ENCODE measurements at regions of chr18 and their contacts with region 1.

Region 1: DNA sequence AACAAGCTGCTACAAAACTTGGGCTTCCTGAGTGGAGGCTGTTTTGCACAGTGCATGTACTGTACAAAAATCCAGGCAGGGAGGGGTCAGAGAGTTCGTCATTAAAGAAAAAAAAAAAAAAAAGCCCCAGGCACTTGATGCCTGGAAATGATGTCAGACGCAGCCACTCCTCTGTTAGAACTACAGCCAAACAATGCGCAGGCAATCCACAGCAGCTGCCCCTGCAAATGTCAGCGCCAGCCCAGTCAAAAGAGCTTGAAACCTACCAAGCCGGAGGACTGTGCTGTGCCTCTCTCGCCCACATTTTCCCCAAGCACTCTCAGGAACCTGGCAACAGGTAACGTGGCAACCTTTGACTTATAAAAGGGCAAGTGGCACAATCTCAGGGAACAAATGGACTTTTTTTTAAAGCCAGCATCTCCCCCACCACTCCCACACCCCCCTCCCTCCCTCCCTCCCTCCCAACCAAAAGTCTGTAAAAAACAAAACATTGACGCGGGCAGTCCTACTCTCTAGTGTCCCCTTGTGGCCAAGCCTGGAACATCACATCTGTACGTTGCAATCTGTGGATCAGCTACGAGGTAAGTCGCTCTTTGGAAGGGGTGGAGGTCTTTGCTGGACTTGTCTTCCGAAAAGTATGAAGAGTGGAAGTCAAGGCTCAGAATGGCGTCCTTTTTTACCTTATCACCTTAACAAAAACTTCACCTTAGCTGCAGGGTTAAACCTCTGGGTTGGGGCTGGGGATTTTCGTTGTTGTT is 144.1 kb downstream of the TGIF1 start:
- DNase-seq: peak; percentile 91 to 93
- H3K4me3 ChIP-seq: peak overlapping the region; percentile 69
- H3K27ac ChIP-seq: peak overlapping the region; percentile 100
- H3K4me1 ChIP-seq: peaks cover 77% of the 10 kb centered on the region
- H3K27me3 ChIP-seq: no peaks in the 10 kb centered on the region
- CTCF ChIP-seq: peak; percentile 88

Region 2: GRCh38 chr18:3281456-3282400 is 312.4 kb before region 1 on chr18:
- CTCF ChIA-PET with region 1: interaction called, 5 read pairs
- POLR2A ChIA-PET with region 1: interaction called, 43 read pairs
- intact Hi-C with region 1: loop called (anchors 1 kb)
- DNase-seq: peak in 1 of 2 experiments; percentile 75
- H3K4me3 ChIP-seq: no peak overlapping the region
- H3K27ac ChIP-seq: peak overlapping the region; percentile 23; the same call in 1 of the 2 replicates
- H3K4me1 ChIP-seq: peaks cover 24% of the 10 kb centered on the region
- H3K27me3 ChIP-seq: no peaks in the 10 kb centered on the region
- CTCF ChIP-seq: peak; percentile 85

Region 3: GRCh38 chr18:3389977-3390376 is 204.1 kb before region 1 on chr18:
- CTCF ChIA-PET with region 1: no interaction called
- POLR2A ChIA-PET with region 1: interaction called, 15 read pairs
- intact Hi-C with region 1: no loop called
- DNase-seq: no peak
- H3K4me3 ChIP-seq: no peak overlapping the region
- H3K27ac ChIP-seq: 0 out of 2 replicates have a peak overlapping the region, but pooled peaks have one; percentile 99
- H3K4me1 ChIP-seq: peaks cover 50% of the 10 kb centered on the region
- H3K27me3 ChIP-seq: no peaks in the 10 kb centered on the region
- CTCF ChIP-seq: no peak

Region 4: DNA sequence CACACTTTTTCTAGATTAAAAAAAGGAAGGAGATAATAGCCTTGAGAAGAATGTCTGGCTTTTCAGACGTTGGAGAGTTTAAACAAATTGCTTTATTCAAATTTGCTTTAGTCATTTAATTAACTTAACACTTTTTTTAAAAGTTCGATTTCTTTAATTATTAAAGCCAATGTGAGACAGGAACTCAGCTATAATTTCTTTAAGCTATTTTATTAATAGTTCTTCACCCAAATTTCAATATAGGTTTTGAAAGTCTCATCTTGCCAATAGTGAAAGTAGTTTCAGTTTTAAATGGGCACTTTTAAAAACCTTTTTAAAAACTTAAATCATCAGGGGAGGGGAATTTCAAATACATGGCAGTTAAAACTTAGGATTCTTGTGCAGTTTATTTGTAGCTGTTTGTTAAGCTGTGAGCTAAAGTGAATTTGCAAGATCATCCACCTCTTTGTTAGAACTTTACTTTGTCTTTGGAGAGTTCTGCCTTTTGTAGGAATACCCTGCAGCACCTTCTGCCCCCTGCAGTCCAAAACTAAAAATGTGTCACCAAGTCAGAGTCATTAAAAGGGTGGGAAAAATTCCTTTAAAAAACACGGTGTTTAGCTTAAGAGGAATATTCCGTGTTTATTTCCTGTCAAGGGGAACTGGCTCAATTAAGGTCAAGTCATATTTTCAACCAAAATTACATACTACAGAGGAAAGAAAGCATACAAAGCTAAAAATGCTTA is 139.6 kb before region 1 on chr18:
- CTCF ChIA-PET with region 1: interaction called, 3 read pairs
- POLR2A ChIA-PET with region 1: interaction called, 8 read pairs
- intact Hi-C with region 1: loop called (anchors 1 kb)
- DNase-seq: peak; percentile 41 to 52
- H3K4me3 ChIP-seq: peak overlapping the region; percentile 83
- H3K27ac ChIP-seq: peak overlapping the region; percentile 96
- H3K4me1 ChIP-seq: peaks cover 49% of the 10 kb centered on the region
- H3K27me3 ChIP-seq: no peaks in the 10 kb centered on the region; the same call in 1 of the 2 replicates
- CTCF ChIP-seq: peak; percentile 79

Region 5: DNA sequence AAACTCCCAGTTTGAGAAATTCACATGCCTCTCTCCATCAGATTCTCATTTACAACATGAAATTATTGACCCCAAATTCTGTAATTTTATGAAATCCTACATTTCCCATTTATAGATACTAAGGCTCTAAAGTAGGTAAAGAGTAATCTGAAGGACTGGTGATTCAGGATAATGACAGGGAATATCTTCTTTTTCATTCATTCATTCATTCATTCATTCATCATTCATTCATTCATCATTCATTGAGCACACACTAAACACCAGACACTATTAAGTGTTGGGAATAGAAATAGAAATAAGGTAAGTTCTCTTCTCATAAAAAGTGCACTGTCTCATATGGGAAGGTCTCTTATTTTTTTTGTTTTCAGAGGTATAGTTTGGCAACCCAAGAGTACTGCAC is 27.2 kb before region 1 on chr18:
- CTCF ChIA-PET with region 1: no interaction called
- POLR2A ChIA-PET with region 1: interaction called, 14 read pairs
- intact Hi-C with region 1: no loop called
- DNase-seq: no peak
- H3K4me3 ChIP-seq: no peak overlapping the region
- H3K27ac ChIP-seq: no peak overlapping the region
- H3K4me1 ChIP-seq: no peaks in the 10 kb centered on the region
- H3K27me3 ChIP-seq: no peaks in the 10 kb centered on the region
- CTCF ChIP-seq: no peak

Region 6: GRCh38 chr18:3665780-3666525 is 71.9 kb after region 1 on chr18:
- CTCF ChIA-PET with region 1: interaction called, 27 read pairs
- POLR2A ChIA-PET with region 1: interaction called, 12 read pairs
- intact Hi-C with region 1: loop called (anchors 1 kb)
- DNase-seq: peak; percentile 78 to 89
- H3K4me3 ChIP-seq: peak overlapping the region; percentile 45; the same call in 1 of the 2 replicates
- H3K27ac ChIP-seq: peak overlapping the region; percentile 96
- H3K4me1 ChIP-seq: peaks cover 33% of the 10 kb centered on the region
- H3K27me3 ChIP-seq: no peaks in the 10 kb centered on the region
- CTCF ChIP-seq: peak; percentile 97

Measured in PC-9 (cell line).